ENCODE measurements at regions of chr5 and their contacts with region 1.

Region 1: GRCh38 chr5:178130604-178131485 is at the start of gene RMND5B:
- DNase-seq: peak; percentile 89 to 93
- H3K4me3 ChIP-seq: peak within 1 kb of the TSS; percentile 94
- H3K4me3 Mint-ChIP-seq: peak within 1 kb of the TSS; percentile 75
- H3K27ac Mint-ChIP-seq: peak within 1 kb of the TSS; percentile 72
- H3K4me1 ChIP-seq: peaks cover 6% of the 10 kb centered on the region; the same call in 1 of the 2 replicates
- H3K4me1 Mint-ChIP-seq: peaks cover 8% of the 10 kb centered on the region
- H3K27me3 ChIP-seq: no peaks in the 10 kb centered on the region
- H3K27me3 Mint-ChIP-seq: no peaks in the 10 kb centered on the region
- CTCF ChIP-seq: no peak
- total RNA-seq, gene RMND5B: 45.6 and 48.4 TPM in 2 replicates

Region 2: DNA sequence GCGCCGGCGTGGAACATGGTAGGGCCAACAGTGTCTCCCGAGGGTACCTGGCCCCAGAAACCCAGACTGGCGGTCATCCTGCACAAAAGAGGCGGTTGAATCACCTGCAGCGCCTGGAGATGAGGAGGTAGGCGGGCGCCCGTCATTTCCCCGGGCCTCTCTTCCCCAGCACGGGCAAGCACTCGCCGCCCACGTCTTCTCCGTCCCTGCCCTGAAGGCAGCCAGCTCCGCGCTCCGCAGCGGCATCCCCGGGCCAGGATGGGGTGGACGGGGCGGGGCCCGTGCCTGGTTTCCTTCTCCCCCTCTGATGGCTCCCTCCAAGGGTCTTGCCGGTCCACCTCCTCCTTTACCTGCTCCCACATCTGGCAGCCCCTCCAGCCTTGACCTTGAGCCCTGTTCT is 44.6 kb before region 1 on chr5:
- CTCF ChIA-PET with region 1: no interaction called
- POLR2A ChIA-PET with region 1: interaction called, 11 read pairs
- intact Hi-C with region 1: no loop called
- DNase-seq: no peak
- H3K4me3 ChIP-seq: no peak overlapping the region
- H3K4me3 Mint-ChIP-seq: no peak overlapping the region
- H3K27ac Mint-ChIP-seq: no peak overlapping the region
- H3K4me1 ChIP-seq: no peaks in the 10 kb centered on the region
- H3K4me1 Mint-ChIP-seq: no peaks in the 10 kb centered on the region
- H3K27me3 ChIP-seq: no peaks in the 10 kb centered on the region; the same call in 1 of the 2 replicates
- H3K27me3 Mint-ChIP-seq: peaks cover 6% of the 10 kb centered on the region
- CTCF ChIP-seq: no peak

Region 3: GRCh38 chr5:178113199-178113787 is 17.6 kb before region 1 on chr5 and contains the start of gene N4BP3:
- CTCF ChIA-PET with region 1: no interaction called
- POLR2A ChIA-PET with region 1: no interaction called
- intact Hi-C with region 1: loop called (anchors 1 kb)
- DNase-seq: peak; percentile 85 to 91
- H3K4me3 ChIP-seq: peak within 1 kb of the TSS; percentile 74
- H3K4me3 Mint-ChIP-seq: peak within 1 kb of the TSS; percentile 89
- H3K27ac Mint-ChIP-seq: peak within 1 kb of the TSS; percentile 16
- H3K4me1 ChIP-seq: peaks cover 19% of the 10 kb centered on the region
- H3K4me1 Mint-ChIP-seq: peaks cover 12% of the 10 kb centered on the region
- H3K27me3 ChIP-seq: no peaks in the 10 kb centered on the region
- H3K27me3 Mint-ChIP-seq: peaks cover 5% of the 10 kb centered on the region
- CTCF ChIP-seq: no peak
- total RNA-seq, gene N4BP3: 2.9 and 3.2 TPM in 2 replicates